Heart left ventricle (tissue), 16 donors: ENCODE measurements at regions of chr2 and their contacts with region 1.

Region 1: GRCh38 chr2:190088917-190089316 is 26.4 kb upstream of the MSTN start:
- DNase-seq: peak in 3 of 5 donors; percentile 34 to 44 (median 36)
- ATAC-seq: peak in 3 of 4 donors; percentile 39 to 78 (median 59)
- H3K4me3 ChIP-seq: no peak overlapping the region
- H3K27ac ChIP-seq: no peak overlapping the region
- H3K4me1 ChIP-seq: no peaks in the 10 kb centered on the region
- H3K27me3 ChIP-seq: no peaks in the 10 kb centered on the region
- CTCF ChIP-seq: peak; percentile 58 to 89 (median 74)
- POLR2A ChIP-seq: no peak

Region 2: DNA sequence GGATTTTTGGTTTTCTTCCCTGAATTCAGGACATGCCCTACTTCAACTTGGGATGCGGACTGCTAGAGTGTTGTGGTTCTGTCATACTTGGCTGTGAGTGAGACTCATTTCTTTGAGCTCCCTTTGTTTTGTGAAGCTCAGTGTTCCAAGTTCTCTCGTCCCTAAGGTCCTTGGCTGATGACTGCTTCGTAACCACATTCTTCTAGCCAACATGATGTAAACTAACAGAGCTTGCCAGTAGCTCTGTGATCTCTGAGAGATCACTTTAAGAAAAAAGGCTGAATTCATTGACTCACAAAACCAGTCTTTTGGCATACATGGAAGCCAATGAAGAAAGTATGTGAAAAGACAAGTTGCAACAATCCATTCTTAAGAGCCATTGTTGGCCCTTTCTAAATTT is 70.5 kb after region 1 on chr2:
- intact Hi-C with region 1: loop called in 1 of 10 experiments (anchors 10 kb)
- DNase-seq: peak in 4 of 5 donors; percentile 28 to 42 (median 36)
- ATAC-seq: peak; percentile 82 to 98 (median 97)
- H3K4me3 ChIP-seq: peak overlapping the region in 1 of 12 donors; percentile 17
- H3K27ac ChIP-seq: peak overlapping the region in 6 of 12 donors; percentile 3 to 45 (median 24)
- H3K4me1 ChIP-seq: peaks cover 0 to 5% (median 0%) of the 10 kb centered on the region in 12 donors
- H3K27me3 ChIP-seq: no peaks in the 10 kb centered on the region
- CTCF ChIP-seq: no peak
- POLR2A ChIP-seq: no peak

Region 3: GRCh38 chr2:190270298-190270697 is 181.4 kb after region 1 on chr2:
- intact Hi-C with region 1: loop called in 3 of 10 experiments (anchors 5 kb)
- DNase-seq: no peak
- ATAC-seq: no peak
- H3K4me3 ChIP-seq: no peak overlapping the region
- H3K27ac ChIP-seq: no peak overlapping the region
- H3K4me1 ChIP-seq: peaks cover 0 to 5% (median 0%) of the 10 kb centered on the region in 12 donors
- H3K27me3 ChIP-seq: no peaks in the 10 kb centered on the region
- CTCF ChIP-seq: no peak
- POLR2A ChIP-seq: no peak

Region 4: GRCh38 chr2:190369635-190370034 is 280.7 kb after region 1 on chr2:
- intact Hi-C with region 1: loop called in 7 of 10 experiments (anchors 2 to 10 kb)
- DNase-seq: no peak
- ATAC-seq: no peak
- H3K4me3 ChIP-seq: no peak overlapping the region
- H3K27ac ChIP-seq: no peak overlapping the region
- H3K4me1 ChIP-seq: no peaks in the 10 kb centered on the region
- H3K27me3 ChIP-seq: no peaks in the 10 kb centered on the region
- CTCF ChIP-seq: no peak
- POLR2A ChIP-seq: no peak

Region 5: DNA sequence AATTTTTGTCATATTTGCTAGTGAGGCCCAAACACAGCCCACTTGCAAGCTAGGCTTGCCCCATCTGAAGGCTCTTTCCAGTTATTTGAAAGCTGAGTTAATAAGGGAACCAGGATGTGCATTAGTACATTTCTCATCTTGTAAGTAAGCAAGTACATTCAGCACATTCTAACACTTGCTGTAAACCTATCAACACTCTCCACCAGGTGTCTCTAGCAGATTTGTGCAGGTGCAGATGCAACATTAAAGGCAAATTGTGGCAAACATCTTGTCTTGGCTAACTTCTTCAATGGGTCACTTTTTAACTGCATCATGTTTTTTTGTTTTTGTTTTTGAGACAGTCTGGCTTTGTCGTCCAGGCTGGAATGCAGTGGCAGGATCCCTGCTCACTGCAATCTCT is 293.9 kb after region 1 on chr2:
- intact Hi-C with region 1: loop called in 2 of 10 experiments (anchors 5 to 10 kb)
- DNase-seq: no peak
- ATAC-seq: peak; percentile 51 to 71 (median 62)
- H3K4me3 ChIP-seq: no peak overlapping the region
- H3K27ac ChIP-seq: no peak overlapping the region
- H3K4me1 ChIP-seq: no peaks in the 10 kb centered on the region
- H3K27me3 ChIP-seq: no peaks in the 10 kb centered on the region
- CTCF ChIP-seq: peak; percentile 33 to 71 (median 59)
- POLR2A ChIP-seq: no peak

Region 6: GRCh38 chr2:190804182-190804795 is 715.4 kb after region 1 on chr2:
- intact Hi-C with region 1: loop called in 6 of 10 experiments (anchors 5 to 10 kb)
- DNase-seq: no peak
- ATAC-seq: no peak
- H3K4me3 ChIP-seq: no peak overlapping the region
- H3K27ac ChIP-seq: no peak overlapping the region
- H3K4me1 ChIP-seq: peaks cover 0 to 4% (median 0%) of the 10 kb centered on the region in 12 donors
- H3K27me3 ChIP-seq: no peaks in the 10 kb centered on the region
- CTCF ChIP-seq: peak; percentile 46 to 79 (median 70)
- POLR2A ChIP-seq: no peak